ENCODE measurements at regions of chr1 and their contacts with region 1.

Region 1: GRCh38 chr1:229507951-229508822 is at the start of gene NUP133:
- DNase-seq: peak; percentile 95 to 99 (median 97)
- ATAC-seq: peak; percentile 97
- H3K4me3 Mint-ChIP-seq: peak within 1 kb of the TSS; percentile 87 to 95 (median 93)
- H3K27ac Mint-ChIP-seq: peak within 1 kb of the TSS; percentile 96 to 100 (median 98)
- H3K4me1 Mint-ChIP-seq: peaks cover 10 to 42% (median 26%) of the 10 kb centered on the region in 4 donors
- H3K27me3 Mint-ChIP-seq: peaks cover 0 to 2% (median 0%) of the 10 kb centered on the region in 5 donors
- polyA plus RNA-seq, gene NUP133: 14.5 to 17.7 (median 15.5) TPM

Region 2: DNA sequence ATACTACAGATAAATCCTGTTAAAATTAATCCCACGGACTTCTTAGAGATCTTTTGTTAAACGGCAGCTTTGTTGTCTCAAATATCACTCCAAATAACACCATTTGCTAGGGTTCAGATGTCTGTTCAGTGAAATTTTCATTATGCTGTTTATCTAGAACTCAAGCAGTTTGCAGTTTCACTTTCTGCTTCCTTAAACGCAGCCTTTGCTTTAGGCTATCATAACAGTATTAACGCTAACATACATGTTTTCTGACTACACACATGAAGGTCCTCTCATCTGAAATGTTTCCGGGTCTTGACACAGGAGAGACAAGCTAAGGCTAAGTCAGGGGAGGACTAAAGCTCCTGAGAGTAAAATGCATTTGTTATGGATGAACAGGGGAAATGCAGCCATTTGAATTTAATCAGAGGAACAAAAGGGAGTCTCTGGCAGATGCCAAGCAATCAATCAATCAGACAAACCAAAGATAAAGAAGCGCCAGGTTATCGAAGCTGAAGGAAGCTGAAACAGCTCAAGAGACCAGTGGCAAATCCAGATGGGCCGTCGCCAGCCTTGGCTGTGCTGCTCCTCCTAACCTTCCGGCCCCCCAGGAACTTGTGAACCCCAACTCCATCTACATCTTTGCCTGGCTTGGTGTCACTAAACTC is 182.2 kb before region 1 on chr1:
- POLR2A ChIA-PET with region 1: no interaction called
- DNase-seq: no peak
- ATAC-seq: peak in 1 of 2 donors; percentile 20
- H3K4me3 Mint-ChIP-seq: peak overlapping the region in 8 of 10 donors; percentile 30 to 82 (median 56)
- H3K27ac Mint-ChIP-seq: peak overlapping the region in 8 of 10 donors; percentile 69 to 96 (median 87)
- H3K4me1 Mint-ChIP-seq: peaks cover 5 to 39% (median 17%) of the 10 kb centered on the region in 4 donors
- H3K27me3 Mint-ChIP-seq: no peaks in the 10 kb centered on the region

Region 3: DNA sequence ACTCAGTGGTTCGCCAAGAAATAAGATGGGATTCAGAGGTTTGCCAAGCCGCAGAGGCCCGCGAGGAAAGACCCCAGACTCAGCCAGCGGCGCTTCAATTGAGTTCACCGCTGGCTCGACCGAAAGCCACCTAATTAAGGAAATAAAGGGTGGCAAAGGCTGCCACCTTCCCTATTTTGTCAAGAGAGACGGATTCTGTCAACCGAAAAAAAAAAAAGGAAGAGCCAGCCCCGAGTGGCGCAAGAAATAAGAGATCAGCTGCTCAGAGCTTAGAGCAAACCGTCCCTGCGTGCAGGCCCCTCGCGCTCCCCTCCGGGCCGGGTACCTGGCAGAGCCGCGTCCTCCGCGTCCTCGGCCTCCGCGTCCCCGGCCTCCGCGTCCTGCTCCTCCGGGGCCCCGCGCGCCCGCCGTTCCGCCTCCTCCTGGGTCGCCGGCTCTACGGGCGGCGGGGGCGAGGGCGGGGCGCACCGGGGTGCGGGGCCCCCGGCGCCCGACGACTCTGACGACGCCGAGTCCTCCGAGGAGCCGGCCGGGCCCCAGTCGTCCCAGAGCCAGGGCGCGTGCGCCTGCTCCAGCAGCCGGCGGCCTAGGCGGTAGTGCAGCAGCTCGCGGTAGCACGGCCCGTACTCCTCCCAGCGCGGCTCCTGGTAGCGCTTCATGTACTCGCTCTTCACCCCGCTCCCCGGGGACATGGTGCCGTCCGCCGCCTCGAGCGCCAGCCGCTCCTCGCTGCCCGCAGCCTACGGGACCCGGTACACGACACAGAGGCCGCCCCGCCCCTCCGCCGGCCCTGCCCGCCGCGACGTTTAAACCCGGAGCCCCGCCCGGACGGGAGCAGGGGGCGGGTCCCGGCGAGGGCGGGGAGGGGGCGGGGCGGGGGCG is 166.2 kb before region 1 on chr1:
- POLR2A ChIA-PET with region 1: interaction called, 13 read pairs
- DNase-seq: peak in 9 of 10 donors; percentile 9 to 87 (median 80)
- ATAC-seq: peak; percentile 71 to 72
- H3K4me3 Mint-ChIP-seq: peak overlapping the region; percentile 89 to 96 (median 93)
- H3K27ac Mint-ChIP-seq: peak overlapping the region; percentile 80 to 97 (median 90)
- H3K4me1 Mint-ChIP-seq: peaks cover 23 to 50% (median 40%) of the 10 kb centered on the region in 4 donors
- H3K27me3 Mint-ChIP-seq: peaks cover 0 to 3% (median 0%) of the 10 kb centered on the region in 5 donors

Region 4: GRCh38 chr1:229470406-229471043 is 37.7 kb before region 1 on chr1:
- POLR2A ChIA-PET with region 1: no interaction called
- DNase-seq: no peak
- ATAC-seq: no peak
- H3K4me3 Mint-ChIP-seq: no peak overlapping the region
- H3K27ac Mint-ChIP-seq: peak overlapping the region in 1 of 10 donors; percentile 40
- H3K4me1 Mint-ChIP-seq: peaks cover 0 to 4% (median 2%) of the 10 kb centered on the region in 4 donors
- H3K27me3 Mint-ChIP-seq: no peaks in the 10 kb centered on the region

Region 5: GRCh38 chr1:229537894-229538293 is 29.7 kb after region 1 on chr1:
- POLR2A ChIA-PET with region 1: no interaction called
- DNase-seq: no peak
- ATAC-seq: no peak
- H3K4me3 Mint-ChIP-seq: no peak overlapping the region
- H3K27ac Mint-ChIP-seq: peak overlapping the region in 1 of 10 donors; percentile 69
- H3K4me1 Mint-ChIP-seq: peaks cover 0 to 10% (median 9%) of the 10 kb centered on the region in 4 donors
- H3K27me3 Mint-ChIP-seq: no peaks in the 10 kb centered on the region